PC-3 (cell line): ENCODE measurements at regions of chr19 and their contacts with region 1.

Region 1: DNA sequence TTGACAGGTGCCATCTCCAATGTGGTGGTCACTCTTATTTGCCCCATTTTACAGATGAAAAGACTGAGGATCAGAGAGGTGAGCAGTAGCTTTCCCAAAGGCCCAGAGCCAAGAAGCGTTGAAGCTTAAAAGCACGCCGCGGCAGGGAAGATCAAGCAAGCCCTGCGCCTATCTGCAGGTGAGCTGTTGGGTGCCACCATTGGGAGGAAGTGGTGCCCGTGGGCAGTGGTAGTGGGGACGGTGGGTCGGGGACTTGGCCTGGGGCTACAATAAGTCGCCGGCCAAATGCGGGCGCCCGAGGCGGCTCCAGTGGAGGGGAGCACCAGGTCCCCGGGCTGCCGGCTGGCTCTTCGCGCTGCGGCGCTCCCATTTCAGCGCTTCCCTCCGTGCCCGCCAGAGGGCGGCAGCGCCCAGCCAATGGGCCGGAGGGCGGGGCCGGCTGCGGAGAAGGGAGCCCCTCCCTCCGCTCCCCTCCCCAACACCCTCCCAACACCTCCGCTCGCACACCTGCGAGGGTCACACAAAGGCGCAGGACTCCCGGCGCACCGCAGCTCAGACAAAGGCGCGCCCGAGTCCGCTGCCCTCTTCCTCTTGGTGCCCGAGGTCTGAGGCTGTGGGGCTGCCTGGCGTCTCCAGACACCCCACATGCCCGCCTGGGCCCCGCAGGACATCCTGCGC is 744 bp upstream of the POU2F2 start:
- DNase-seq: peak; percentile 71
- ATAC-seq: peak; percentile 72
- H3K4me3 ChIP-seq: peak overlapping the region; percentile 66
- H3K27ac ChIP-seq: no peak overlapping the region
- H3K4me1 ChIP-seq: peaks cover 6% of the 10 kb centered on the region; the same call in 1 of the 2 replicates
- H3K27me3 ChIP-seq: no peaks in the 10 kb centered on the region
- CTCF ChIP-seq: peak; percentile 82

Region 2: GRCh38 chr19:41904118-41904870 is 228.7 kb before region 1 on chr19:
- CTCF ChIA-PET with region 1: no interaction called
- POLR2A ChIA-PET with region 1: interaction called, 39 read pairs
- intact Hi-C with region 1: no loop called
- DNase-seq: peak; percentile 81
- ATAC-seq: peak; percentile 92
- H3K4me3 ChIP-seq: no peak overlapping the region
- H3K27ac ChIP-seq: peak overlapping the region; percentile 83
- H3K4me1 ChIP-seq: peaks cover 18% of the 10 kb centered on the region
- H3K27me3 ChIP-seq: no peaks in the 10 kb centered on the region
- CTCF ChIP-seq: no peak

Region 3: GRCh38 chr19:42108527-42109389 is 24.2 kb before region 1 on chr19:
- CTCF ChIA-PET with region 1: no interaction called
- POLR2A ChIA-PET with region 1: no interaction called
- intact Hi-C with region 1: loop called (anchors 1 kb)
- DNase-seq: peak; percentile 85
- ATAC-seq: peak; percentile 68
- H3K4me3 ChIP-seq: no peak overlapping the region
- H3K27ac ChIP-seq: no peak overlapping the region
- H3K4me1 ChIP-seq: peaks cover 23% of the 10 kb centered on the region
- H3K27me3 ChIP-seq: no peaks in the 10 kb centered on the region
- CTCF ChIP-seq: peak; percentile 99

Region 4: DNA sequence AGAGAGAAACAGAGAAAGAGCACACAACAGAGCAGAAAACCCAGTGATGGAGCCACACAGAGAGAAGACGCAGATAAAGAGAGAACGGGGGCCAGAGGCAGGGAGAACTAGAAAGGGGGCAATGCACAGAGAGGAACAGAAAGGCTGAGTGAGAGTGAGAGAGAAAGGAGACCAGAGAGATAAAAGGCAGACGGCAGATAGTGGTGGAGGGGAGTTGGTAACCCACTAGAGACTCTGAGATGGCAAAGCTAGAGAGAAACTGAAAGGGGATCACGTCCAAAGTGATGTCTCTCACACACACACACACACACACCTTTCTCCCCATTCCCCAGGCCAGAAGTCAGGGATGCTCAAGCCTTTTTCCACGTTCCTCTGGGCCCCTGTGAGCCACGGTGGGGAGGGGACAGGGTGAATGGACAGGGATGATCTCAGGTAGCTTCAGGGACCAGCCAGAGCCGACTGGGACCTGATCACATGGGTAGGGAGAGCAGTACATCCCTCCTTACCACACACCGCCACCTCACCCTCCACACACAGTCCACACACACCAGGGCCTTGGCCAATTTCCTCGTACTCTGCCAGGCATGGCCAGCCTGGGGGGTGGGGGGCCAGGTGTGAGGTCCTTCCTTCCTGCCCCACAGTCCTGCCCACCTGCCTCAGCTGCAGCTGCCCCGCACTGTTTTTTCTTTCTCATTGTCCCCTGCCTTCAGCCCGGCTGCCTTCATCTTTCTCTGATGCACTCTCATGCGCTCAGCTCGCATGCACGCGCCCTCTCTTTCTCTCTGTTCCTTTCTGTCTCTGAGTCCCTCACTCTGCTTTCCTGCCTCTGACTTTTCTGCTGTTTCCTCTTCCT is 21.7 kb after region 1 on chr19:
- CTCF ChIA-PET with region 1: no interaction called
- POLR2A ChIA-PET with region 1: no interaction called
- intact Hi-C with region 1: no loop called
- DNase-seq: no peak
- ATAC-seq: no peak
- H3K4me3 ChIP-seq: no peak overlapping the region
- H3K27ac ChIP-seq: no peak overlapping the region
- H3K4me1 ChIP-seq: no peaks in the 10 kb centered on the region
- H3K27me3 ChIP-seq: no peaks in the 10 kb centered on the region
- CTCF ChIP-seq: no peak

Region 5: DNA sequence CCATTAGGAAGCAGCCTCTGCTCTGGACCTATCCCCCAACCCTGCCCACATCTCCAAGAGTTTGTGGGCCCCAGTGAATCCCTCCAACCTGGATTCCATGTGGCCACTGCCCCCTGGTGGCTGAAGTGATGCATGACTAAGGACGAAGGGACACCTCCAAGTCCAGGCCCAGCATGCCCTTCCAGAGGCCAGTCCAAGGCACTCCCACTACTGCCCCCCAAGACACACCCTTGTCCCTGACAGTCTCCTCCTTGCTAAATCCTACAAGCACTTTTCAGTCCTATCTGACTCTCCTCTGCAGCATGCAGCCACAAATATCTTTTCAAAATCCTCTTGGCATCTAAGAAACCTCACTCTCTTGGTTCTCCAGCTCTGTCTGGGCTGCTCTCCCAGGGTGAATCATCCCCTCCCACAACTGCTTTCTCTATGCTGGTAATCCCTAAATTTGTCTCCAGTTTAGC is 51.4 kb after region 1 on chr19:
- CTCF ChIA-PET with region 1: interaction called, 3 read pairs
- POLR2A ChIA-PET with region 1: no interaction called
- intact Hi-C with region 1: loop called (anchors 1 kb)
- DNase-seq: peak; percentile 79
- ATAC-seq: peak; percentile 90
- H3K4me3 ChIP-seq: no peak overlapping the region
- H3K27ac ChIP-seq: no peak overlapping the region
- H3K4me1 ChIP-seq: peaks cover 5% of the 10 kb centered on the region; the same call in 1 of the 2 replicates
- H3K27me3 ChIP-seq: peaks cover 7% of the 10 kb centered on the region; the same call in 1 of the 2 replicates
- CTCF ChIP-seq: peak; percentile 86